Endothelial cell of umbilical vein (primary cell): ENCODE measurements at regions of chr10 and their contacts with region 1.

Region 1: DNA sequence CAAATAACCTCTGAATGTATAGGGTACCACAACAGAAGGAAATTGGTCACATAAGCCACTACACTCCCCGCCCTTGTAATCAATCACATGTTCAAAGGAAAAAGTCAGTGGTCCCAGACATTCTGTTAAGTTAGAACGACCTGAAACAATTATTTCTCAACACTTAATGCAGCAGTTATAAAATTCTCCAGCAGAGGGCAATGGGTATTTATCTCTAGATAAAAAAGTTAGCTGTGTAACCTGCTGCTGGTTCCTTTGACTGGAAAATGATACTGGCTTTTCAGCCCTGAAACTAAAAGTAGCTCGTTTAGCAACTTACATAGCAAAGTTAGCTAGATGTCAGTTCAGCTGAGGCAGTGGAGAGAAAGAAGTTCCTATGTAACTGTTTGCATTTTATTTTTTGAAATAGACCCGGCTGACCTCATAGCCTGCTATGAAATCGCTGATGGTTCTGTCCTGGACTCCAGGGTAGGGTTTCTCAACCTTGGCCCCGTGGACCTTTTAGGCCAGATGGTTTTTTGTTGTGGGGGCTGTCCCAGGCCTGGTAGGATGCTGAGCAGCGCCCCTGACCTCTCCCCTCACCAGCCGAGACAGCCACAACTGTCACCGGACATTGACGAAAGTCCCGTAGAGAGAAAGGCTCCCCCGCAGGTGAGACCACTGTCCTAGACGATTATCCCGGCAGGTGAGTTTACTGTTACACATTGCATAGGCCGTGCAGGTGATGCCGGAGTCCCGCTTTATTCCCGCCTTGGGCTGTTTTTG is 40.2 kb upstream of the PROSER2 start:
- DNase-seq: peak; percentile 64
- H3K4me3 ChIP-seq: no peak overlapping the region
- H3K27ac ChIP-seq: no peak overlapping the region
- H3K4me1 ChIP-seq: no peaks in the 10 kb centered on the region
- H3K27me3 ChIP-seq: peaks cover 0 to 4% of the 10 kb centered on the region in 2 experiments
- CTCF ChIP-seq: peak; percentile 45 to 55
- POLR2A ChIP-seq: no peak

Region 2: DNA sequence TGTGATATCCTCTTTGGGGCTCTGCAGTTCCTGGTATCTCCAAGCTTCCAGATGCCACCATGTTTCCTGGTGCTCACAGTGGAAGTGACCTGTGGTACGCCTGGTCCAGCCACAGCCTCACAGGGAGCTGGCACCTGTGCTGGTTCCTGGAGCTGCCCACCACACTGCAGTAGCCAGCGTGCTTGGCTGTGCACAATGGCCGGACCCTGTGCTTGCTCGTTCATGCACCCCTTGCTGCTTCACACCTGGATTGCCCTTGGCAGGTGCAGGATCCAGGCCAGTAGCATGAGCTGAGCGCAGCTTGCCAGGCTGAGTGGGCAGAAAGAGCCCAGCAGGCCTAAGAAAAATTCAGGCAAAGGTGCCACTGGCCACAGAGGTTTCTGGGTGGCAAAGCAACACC is 52.2 kb before region 1 on chr10:
- CTCF ChIA-PET with region 1: no interaction called
- POLR2A ChIA-PET with region 1: no interaction called
- dilution Hi-C with region 1: no loop called
- intact Hi-C with region 1: no loop called
- DNase-seq: no peak
- H3K4me3 ChIP-seq: no peak overlapping the region
- H3K27ac ChIP-seq: no peak overlapping the region
- H3K4me1 ChIP-seq: no peaks in the 10 kb centered on the region
- H3K27me3 ChIP-seq: peaks cover 0 to 1% of the 10 kb centered on the region in 2 experiments
- CTCF ChIP-seq: no peak
- POLR2A ChIP-seq: no peak

Region 3: DNA sequence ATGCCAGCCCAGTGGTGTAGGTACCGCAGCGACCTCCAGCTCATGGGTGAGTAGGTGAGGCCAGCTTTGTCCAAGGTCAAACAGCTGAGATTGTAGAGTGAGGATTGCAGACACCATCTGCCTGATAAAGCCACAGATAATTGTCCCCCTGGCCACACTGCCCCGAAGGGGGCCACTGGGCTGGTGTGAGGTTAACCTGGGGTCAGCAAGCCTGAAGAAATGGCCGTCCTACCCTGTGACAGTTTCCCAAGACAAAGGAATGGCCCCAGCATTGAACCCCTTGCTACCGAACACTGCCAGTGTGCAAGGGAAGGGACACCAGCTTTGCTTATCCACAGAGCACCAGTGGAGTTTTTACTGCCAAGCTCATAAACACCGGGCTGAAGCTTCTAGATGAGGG is 17.8 kb before region 1 on chr10:
- CTCF ChIA-PET with region 1: interaction called, 11 read pairs
- POLR2A ChIA-PET with region 1: no interaction called
- dilution Hi-C with region 1: no loop called
- intact Hi-C with region 1: no loop called
- DNase-seq: no peak
- H3K4me3 ChIP-seq: no peak overlapping the region
- H3K27ac ChIP-seq: no peak overlapping the region
- H3K4me1 ChIP-seq: no peaks in the 10 kb centered on the region
- H3K27me3 ChIP-seq: peaks cover 0 to 1% of the 10 kb centered on the region in 2 experiments
- CTCF ChIP-seq: no peak
- POLR2A ChIP-seq: no peak

Region 4: GRCh38 chr10:11793762-11794479 is 10.9 kb after region 1 on chr10:
- CTCF ChIA-PET with region 1: interaction called, 39 read pairs
- POLR2A ChIA-PET with region 1: no interaction called
- dilution Hi-C with region 1: no loop called
- intact Hi-C with region 1: no loop called
- DNase-seq: no peak
- H3K4me3 ChIP-seq: no peak overlapping the region
- H3K27ac ChIP-seq: no peak overlapping the region
- H3K4me1 ChIP-seq: peaks cover 15% of the 10 kb centered on the region
- H3K27me3 ChIP-seq: peaks cover 0 to 4% of the 10 kb centered on the region in 2 experiments
- CTCF ChIP-seq: no peak
- POLR2A ChIP-seq: no peak

Region 5: DNA sequence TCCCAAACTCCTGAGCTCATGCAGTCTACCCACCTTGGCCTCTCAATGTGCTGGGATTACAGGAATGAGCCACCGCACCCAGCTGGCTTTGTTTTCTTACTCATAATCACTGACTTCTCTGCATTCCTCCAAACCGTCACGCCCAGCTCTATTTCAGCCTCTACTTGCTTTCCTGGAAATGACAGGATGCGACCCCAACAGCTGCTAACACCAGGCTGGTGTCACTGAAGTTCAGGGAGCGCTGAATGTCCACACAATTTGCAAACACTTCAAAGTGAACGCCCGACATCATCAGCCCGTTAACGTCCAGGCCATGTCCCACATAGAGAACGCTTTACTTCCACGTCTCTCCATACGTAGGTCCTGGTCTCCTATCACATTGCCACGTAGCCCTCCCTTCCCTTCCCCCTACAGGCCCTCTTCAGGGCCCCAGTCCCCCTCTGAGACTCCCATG is 27.4 kb after region 1 on chr10:
- CTCF ChIA-PET with region 1: interaction called, 46 read pairs
- POLR2A ChIA-PET with region 1: no interaction called
- dilution Hi-C with region 1: no loop called
- intact Hi-C with region 1: no loop called
- DNase-seq: peak; percentile 15
- H3K4me3 ChIP-seq: no peak overlapping the region
- H3K27ac ChIP-seq: no peak overlapping the region
- H3K4me1 ChIP-seq: peaks cover 20% of the 10 kb centered on the region
- H3K27me3 ChIP-seq: no peaks in the 10 kb centered on the region
- CTCF ChIP-seq: no peak
- POLR2A ChIP-seq: no peak

Region 6: GRCh38 chr10:11949152-11949551 is 166.2 kb after region 1 on chr10:
- CTCF ChIA-PET with region 1: interaction called, 18 read pairs
- POLR2A ChIA-PET with region 1: no interaction called
- dilution Hi-C with region 1: no loop called
- intact Hi-C with region 1: no loop called
- DNase-seq: no peak
- H3K4me3 ChIP-seq: no peak overlapping the region
- H3K27ac ChIP-seq: no peak overlapping the region
- H3K4me1 ChIP-seq: no peaks in the 10 kb centered on the region
- H3K27me3 ChIP-seq: no peaks in the 10 kb centered on the region
- CTCF ChIP-seq: no peak
- POLR2A ChIP-seq: no peak

Region 7: DNA sequence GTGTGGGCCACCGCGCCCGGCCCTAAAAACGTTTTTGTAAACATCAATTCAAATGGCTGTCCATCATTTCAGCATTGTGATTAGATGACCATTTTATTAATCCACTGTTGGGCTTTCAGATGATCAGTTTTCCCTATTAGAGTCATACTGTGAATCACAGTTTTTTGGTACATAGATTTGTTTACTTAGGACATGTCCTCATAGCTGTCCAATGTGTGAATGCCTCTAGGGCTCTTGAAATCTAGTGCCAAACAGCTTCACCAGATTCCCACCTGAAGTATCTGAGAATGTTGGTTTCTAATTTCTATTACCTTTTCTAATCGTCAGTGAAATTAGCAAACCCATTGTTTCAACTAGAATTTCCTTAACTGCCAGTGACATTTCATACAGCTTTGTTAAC is 192.8 kb after region 1 on chr10:
- CTCF ChIA-PET with region 1: interaction called, 21 read pairs
- POLR2A ChIA-PET with region 1: no interaction called
- dilution Hi-C with region 1: no loop called
- intact Hi-C with region 1: no loop called
- DNase-seq: no peak
- H3K4me3 ChIP-seq: no peak overlapping the region
- H3K27ac ChIP-seq: no peak overlapping the region
- H3K4me1 ChIP-seq: no peaks in the 10 kb centered on the region
- H3K27me3 ChIP-seq: no peaks in the 10 kb centered on the region
- CTCF ChIP-seq: no peak
- POLR2A ChIP-seq: no peak